ENCODE measurements at regions of chr12 and their contacts with region 1.

Region 1: GRCh38 chr12:39824505-39825212 is 205.1 kb upstream of the ABCD2 start:
- DNase-seq: peak; percentile 6
- ATAC-seq: peak; percentile 61
- H3K4me3 ChIP-seq: no peak overlapping the region
- H3K27ac ChIP-seq: peak overlapping the region; percentile 19
- H3K4me1 ChIP-seq: no peaks in the 10 kb centered on the region
- H3K27me3 ChIP-seq: no peaks in the 10 kb centered on the region
- CTCF ChIP-seq: peak; percentile 24; the same call in 1 of the 2 replicates
- EP300 ChIP-seq: no peak
- POLR2A ChIP-seq: no peak
- RAD21 ChIP-seq: no peak

Region 2: DNA sequence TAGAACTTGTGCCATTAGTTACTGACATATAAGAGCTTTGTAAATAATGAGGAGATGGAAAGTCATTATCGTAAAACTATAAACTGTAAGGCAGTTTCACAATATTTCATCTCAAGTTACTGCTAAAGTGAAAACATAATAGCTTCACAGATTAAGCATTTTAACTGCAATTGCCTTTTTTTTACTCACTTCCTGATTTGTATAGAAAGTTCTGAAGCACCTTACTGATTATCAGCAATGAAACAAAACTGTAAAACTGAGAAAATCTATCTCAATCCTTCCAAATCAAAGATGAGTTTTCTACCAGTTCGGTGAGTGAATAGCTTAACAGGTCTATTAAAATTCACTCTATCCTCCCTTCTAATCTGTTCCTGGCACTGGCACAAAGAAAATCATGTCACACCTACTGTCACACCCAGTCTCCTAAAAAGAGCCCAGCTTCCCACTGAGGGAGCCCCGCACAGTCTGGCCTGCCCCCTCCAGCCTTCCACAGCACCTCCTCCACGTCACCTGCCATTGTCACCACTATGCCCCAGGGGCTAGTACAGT is 43.7 kb before region 1 on chr12:
- CTCF ChIA-PET with region 1: no interaction called
- POLR2A ChIA-PET with region 1: no interaction called
- in situ Hi-C with region 1: no loop called
- intact Hi-C with region 1: no loop called
- DNase-seq: no peak
- ATAC-seq: no peak
- H3K4me3 ChIP-seq: no peak overlapping the region
- H3K27ac ChIP-seq: no peak overlapping the region
- H3K4me1 ChIP-seq: no peaks in the 10 kb centered on the region
- H3K27me3 ChIP-seq: no peaks in the 10 kb centered on the region
- CTCF ChIP-seq: no peak
- EP300 ChIP-seq: no peak
- POLR2A ChIP-seq: no peak
- RAD21 ChIP-seq: no peak

Region 3: GRCh38 chr12:39958377-39958776 is 133.7 kb after region 1 on chr12:
- CTCF ChIA-PET with region 1: no interaction called
- POLR2A ChIA-PET with region 1: no interaction called
- in situ Hi-C with region 1: no loop called
- intact Hi-C with region 1: loop called (anchors 5 kb)
- DNase-seq: peak; percentile 9
- ATAC-seq: peak; percentile 61; the same call in 2 of the 3 replicates
- H3K4me3 ChIP-seq: no peak overlapping the region
- H3K27ac ChIP-seq: no peak overlapping the region
- H3K4me1 ChIP-seq: no peaks in the 10 kb centered on the region
- H3K27me3 ChIP-seq: no peaks in the 10 kb centered on the region
- CTCF ChIP-seq: peak; percentile 48
- EP300 ChIP-seq: no peak
- POLR2A ChIP-seq: no peak
- RAD21 ChIP-seq: no peak

Measured in HepG2 (cell line).